Activated CD4-positive, alpha-beta memory T cell treated with anti-CD3 and anti-CD28 coated beads for 36 hours (primary cell): ENCODE measurements at regions of chr9 and their contacts with region 1.

Region 1: GRCh38 chr9:88106491-88106890 is 31.8 kb downstream of the SPATA31C2 start:
- DNase-seq: peak; percentile 39
- H3K4me3 Mint-ChIP-seq: no peak overlapping the region
- H3K27ac Mint-ChIP-seq: no peak overlapping the region
- H3K4me1 Mint-ChIP-seq: peaks cover 7% of the 10 kb centered on the region
- H3K27me3 Mint-ChIP-seq: peaks cover 24% of the 10 kb centered on the region

Region 2: GRCh38 chr9:87894998-87895625 is 211.4 kb before region 1 on chr9:
- CTCF ChIA-PET with region 1: no interaction called
- POLR2A ChIA-PET with region 1: no interaction called
- intact Hi-C with region 1: no loop called
- DNase-seq: no peak
- H3K4me3 Mint-ChIP-seq: no peak overlapping the region
- H3K27ac Mint-ChIP-seq: no peak overlapping the region
- H3K4me1 Mint-ChIP-seq: no peaks in the 10 kb centered on the region
- H3K27me3 Mint-ChIP-seq: peaks cover 23% of the 10 kb centered on the region

Region 3: GRCh38 chr9:87944096-87944495 is 162.4 kb before region 1 on chr9:
- CTCF ChIA-PET with region 1: no interaction called
- POLR2A ChIA-PET with region 1: no interaction called
- intact Hi-C with region 1: loop called (anchors 10 kb)
- DNase-seq: no peak
- H3K4me3 Mint-ChIP-seq: no peak overlapping the region
- H3K27ac Mint-ChIP-seq: no peak overlapping the region
- H3K4me1 Mint-ChIP-seq: peaks cover 7% of the 10 kb centered on the region
- H3K27me3 Mint-ChIP-seq: peaks cover 29% of the 10 kb centered on the region

Region 4: DNA sequence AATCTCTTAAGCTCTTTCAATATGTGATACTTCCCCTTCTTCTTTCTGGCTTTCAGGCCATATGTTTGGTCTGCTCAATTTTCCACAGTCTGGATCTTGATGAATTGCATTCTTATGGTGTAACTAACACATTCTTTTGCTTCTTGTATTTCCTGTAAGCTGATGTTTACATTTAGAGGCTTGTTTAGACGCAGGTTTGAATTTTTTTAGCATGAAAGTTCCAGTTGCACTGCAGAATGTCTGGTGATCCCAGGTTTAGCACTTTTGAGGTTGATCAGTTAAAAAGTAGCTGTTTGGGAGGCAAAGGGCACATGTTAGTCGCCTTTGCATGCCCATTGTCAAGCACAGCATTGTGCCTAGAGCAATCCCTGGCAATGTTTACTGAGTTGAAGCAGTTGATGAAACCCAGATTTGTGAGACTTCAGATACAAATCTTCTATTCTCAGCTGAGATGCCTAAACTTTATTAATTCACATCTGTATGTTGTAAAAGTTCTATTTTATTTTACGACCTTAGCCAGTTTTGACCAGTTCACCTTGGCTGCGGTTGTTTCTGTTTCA is 91.4 kb after region 1 on chr9:
- CTCF ChIA-PET with region 1: no interaction called
- POLR2A ChIA-PET with region 1: no interaction called
- intact Hi-C with region 1: no loop called
- DNase-seq: no peak
- H3K4me3 Mint-ChIP-seq: no peak overlapping the region
- H3K27ac Mint-ChIP-seq: no peak overlapping the region
- H3K4me1 Mint-ChIP-seq: no peaks in the 10 kb centered on the region
- H3K27me3 Mint-ChIP-seq: peaks cover 25% of the 10 kb centered on the region

Region 5: DNA sequence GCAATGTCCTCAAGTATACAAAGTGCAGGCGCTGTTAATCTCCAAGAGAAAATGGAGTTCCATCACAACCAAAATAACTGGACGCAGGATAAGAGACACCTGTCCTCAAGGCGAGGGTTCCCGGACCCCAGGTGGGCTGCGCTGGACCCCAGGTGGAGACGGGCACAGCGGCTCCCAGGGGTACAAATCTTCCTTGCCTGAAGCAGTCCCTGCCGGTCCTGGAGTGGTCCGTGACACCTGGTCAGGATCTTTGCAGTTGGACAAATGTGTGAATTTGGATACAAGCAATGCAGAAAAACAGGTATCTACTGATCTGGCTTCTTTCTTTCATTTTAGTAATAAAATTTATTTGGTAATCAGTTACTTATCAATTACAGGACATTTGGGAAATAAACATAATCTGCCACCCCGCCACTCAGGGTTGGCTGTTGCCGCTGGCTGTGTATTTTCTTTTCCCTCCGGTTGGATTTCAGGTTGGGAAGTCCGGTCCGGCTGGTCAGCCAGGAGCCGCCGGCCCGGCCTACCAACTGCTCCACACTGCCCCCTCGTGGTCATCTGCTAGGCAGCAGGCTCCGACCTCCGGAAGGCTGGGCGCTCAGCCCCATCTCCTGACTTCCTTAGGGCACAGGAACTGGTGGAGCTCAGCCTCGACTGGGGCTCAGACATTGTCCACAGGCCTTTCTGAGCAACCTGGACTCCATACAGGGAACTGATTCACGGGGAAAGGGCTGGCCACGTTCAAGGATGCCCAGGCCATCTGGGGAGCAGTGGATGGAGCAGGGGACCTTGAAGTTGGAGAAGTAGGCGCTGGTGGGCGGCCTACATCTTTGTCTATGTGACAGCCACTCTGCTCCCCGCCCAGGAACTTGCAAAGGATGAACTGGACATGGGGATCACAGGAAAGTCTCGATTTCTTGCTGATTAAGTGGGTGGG is 471.9 kb after region 1 on chr9:
- CTCF ChIA-PET with region 1: interaction called, 5 read pairs
- POLR2A ChIA-PET with region 1: no interaction called
- intact Hi-C with region 1: loop called (anchors 5 kb)
- DNase-seq: peak; percentile 76
- H3K4me3 Mint-ChIP-seq: peak overlapping the region; percentile 30
- H3K27ac Mint-ChIP-seq: no peak overlapping the region
- H3K4me1 Mint-ChIP-seq: peaks cover 3% of the 10 kb centered on the region
- H3K27me3 Mint-ChIP-seq: peaks cover 18% of the 10 kb centered on the region